Heart left ventricle (tissue), 16 donors: ENCODE measurements at regions of chr18 and their contacts with region 1.

Region 1: DNA sequence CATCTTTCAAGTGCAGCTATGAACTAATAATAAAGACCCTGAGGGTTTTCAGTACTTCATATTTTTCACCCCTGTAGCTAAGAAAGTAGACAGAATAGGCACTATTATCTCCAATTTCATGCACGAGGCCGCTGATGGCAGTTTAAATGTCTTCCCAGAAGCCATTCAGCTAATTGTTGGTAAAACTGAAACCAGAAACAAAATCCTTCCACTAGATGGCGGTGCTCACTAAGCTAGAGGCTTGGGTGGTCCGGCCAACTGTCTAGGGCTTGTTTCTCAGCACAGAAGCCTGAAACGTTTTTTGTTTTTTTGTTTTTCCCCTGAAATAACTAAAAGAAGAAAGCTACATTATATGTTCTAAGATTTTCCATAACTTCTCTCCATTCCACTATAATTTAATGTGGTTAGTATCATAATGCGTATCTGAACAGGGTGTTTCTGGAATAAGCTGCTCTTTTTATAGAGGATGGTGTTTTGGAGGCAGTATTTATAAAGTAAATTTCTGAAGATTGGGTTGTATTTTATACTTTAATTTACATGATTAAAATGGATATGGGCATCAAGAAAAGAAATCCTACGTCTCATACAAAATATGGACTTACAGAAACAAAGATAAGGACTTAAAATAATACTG is 159.4 kb downstream of the PIK3C3 start:
- DNase-seq: peak in 4 of 5 donors; percentile 31 to 60 (median 55)
- ATAC-seq: peak; percentile 69 to 88 (median 78)
- H3K4me3 ChIP-seq: no peak overlapping the region
- H3K27ac ChIP-seq: no peak overlapping the region
- H3K4me1 ChIP-seq: peaks cover 0 to 16% (median 2%) of the 10 kb centered on the region in 12 donors
- H3K27me3 ChIP-seq: no peaks in the 10 kb centered on the region
- CTCF ChIP-seq: peak; percentile 83 to 96 (median 89)
- POLR2A ChIP-seq: no peak

Region 2: DNA sequence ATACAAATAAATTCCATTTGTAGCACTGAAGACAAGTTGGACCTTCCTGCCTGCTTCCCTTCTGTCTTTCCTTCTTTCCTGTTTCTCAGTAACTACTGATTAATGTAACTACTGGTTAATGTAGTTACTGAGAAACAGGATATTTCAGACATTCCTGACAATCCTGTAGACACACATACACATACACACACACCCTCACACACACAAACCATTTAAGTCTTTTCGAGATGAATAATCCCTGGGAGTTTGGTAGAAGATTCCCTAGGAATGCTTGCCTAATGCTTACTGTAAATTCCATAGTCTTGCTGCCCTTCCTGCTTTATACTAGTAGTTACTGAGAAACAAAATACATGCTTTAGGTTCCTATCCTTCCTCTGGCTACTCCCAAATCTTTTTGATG is 75.5 kb before region 1 on chr18:
- intact Hi-C with region 1: no loop called
- DNase-seq: no peak
- ATAC-seq: no peak
- H3K4me3 ChIP-seq: no peak overlapping the region
- H3K27ac ChIP-seq: no peak overlapping the region
- H3K4me1 ChIP-seq: no peaks in the 10 kb centered on the region
- H3K27me3 ChIP-seq: no peaks in the 10 kb centered on the region
- CTCF ChIP-seq: no peak
- POLR2A ChIP-seq: no peak

Region 3: DNA sequence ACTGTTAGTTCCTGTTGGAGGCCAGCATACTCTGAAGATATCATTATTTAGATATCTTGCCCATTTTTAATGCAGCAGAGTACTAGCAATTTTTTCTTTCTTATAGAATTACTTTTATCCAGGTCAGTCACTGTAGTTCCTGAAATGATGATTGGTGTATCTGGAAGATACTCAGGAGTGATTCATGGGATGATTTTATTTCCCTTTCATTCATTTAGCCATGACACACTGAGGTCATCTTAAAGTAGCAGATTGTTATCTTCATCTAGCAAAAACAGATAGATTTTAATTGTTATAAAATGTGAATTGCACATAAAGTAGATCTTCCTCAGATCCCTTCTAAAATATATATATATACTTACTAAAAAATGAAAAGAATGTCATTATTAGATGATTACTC is 50.3 kb before region 1 on chr18:
- intact Hi-C with region 1: no loop called
- DNase-seq: no peak
- ATAC-seq: no peak
- H3K4me3 ChIP-seq: no peak overlapping the region
- H3K27ac ChIP-seq: no peak overlapping the region
- H3K4me1 ChIP-seq: no peaks in the 10 kb centered on the region
- H3K27me3 ChIP-seq: no peaks in the 10 kb centered on the region
- CTCF ChIP-seq: no peak
- POLR2A ChIP-seq: no peak

Region 4: GRCh38 chr18:42274488-42275137 is 160.2 kb after region 1 on chr18:
- intact Hi-C with region 1: loop called in 4 of 10 experiments (anchors 1 to 10 kb)
- DNase-seq: no peak
- ATAC-seq: no peak
- H3K4me3 ChIP-seq: no peak overlapping the region
- H3K27ac ChIP-seq: no peak overlapping the region
- H3K4me1 ChIP-seq: peaks cover 0 to 16% (median 8%) of the 10 kb centered on the region in 12 donors
- H3K27me3 ChIP-seq: no peaks in the 10 kb centered on the region
- CTCF ChIP-seq: peak in 2 of 12 donors; percentile 24 to 30
- POLR2A ChIP-seq: no peak

Region 5: DNA sequence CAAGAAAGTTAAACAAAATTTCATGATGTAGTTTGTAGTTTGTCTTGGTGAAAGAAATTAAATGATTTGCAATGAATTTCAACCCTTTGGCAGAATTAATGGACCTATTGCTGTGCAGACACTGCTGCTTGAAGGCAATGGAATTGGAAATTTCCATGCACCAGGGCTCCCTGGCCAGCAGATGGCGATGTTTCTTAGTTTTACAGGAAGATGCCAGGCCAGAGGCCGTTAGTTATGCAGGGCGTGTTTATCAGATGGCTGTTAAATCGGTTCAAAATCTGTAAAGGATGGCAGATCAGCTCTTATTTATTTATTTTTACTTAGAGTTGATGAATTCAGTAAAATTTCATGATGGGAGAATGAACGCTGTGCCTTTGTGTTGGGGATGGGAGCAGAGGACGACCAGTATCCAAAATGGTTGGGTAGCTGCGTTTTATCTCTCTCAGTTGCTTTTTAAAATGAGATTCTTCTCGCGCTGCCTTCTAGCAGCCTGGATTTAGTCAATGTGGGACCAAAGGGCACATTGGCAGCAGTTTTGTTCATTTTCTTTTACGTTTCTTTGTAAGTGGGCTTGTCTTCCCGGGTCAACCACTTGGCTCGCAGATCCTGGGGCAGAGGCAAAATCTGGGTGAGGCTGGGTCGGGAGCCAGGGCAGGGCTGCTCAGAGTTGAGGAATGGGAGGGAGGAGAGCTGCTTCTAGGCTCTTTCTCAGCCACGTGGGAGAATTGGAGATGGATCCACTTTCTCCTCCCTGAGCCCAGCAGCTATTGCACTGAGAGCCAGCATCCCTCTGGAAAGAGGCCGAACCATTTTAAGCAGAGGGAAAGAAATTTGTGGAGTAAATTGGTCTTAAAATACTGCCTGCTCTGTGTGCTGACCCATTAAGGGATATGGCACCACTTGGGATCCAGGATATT is 184.6 kb after region 1 on chr18:
- intact Hi-C with region 1: loop called in 5 of 10 experiments (anchors 5 to 10 kb)
- DNase-seq: peak in 4 of 5 donors; percentile 54 to 58 (median 57)
- ATAC-seq: peak; percentile 20 to 94 (median 82)
- H3K4me3 ChIP-seq: peak overlapping the region in 11 of 12 donors; percentile 1 to 43 (median 19)
- H3K27ac ChIP-seq: peak overlapping the region in 6 of 12 donors; percentile 9 to 40 (median 27)
- H3K4me1 ChIP-seq: peaks cover 0 to 3% (median 0%) of the 10 kb centered on the region in 12 donors
- H3K27me3 ChIP-seq: no peaks in the 10 kb centered on the region
- CTCF ChIP-seq: peak; percentile 83 to 96 (median 90)
- POLR2A ChIP-seq: no peak

Region 6: DNA sequence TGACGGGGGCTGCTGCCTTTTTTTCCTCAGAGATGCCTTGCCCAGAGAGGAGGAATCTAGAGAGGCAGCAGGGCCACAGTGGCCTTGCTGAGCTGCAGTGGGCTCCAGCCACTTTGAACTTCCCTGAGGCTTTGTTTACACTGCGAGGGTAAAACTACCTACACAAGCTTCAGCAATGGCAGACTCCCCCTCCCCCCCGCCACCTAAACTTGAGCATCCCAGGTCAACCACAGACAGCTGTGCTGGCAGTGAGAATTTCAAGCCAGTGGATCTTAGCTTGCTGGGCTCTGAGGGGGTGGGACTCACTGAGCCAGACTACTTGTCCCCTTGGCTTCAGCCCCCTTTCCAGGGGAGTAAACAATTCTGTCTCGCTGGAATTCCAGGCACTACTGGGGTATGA is 1151.0 kb after region 1 on chr18:
- intact Hi-C with region 1: loop called in 9 of 10 experiments (anchors 2 to 10 kb)
- DNase-seq: no peak
- ATAC-seq: no peak
- H3K4me3 ChIP-seq: no peak overlapping the region
- H3K27ac ChIP-seq: no peak overlapping the region
- H3K4me1 ChIP-seq: no peaks in the 10 kb centered on the region
- H3K27me3 ChIP-seq: no peaks in the 10 kb centered on the region
- CTCF ChIP-seq: no peak
- POLR2A ChIP-seq: no peak

Region 7: GRCh38 chr18:43396266-43396665 is 1281.8 kb after region 1 on chr18:
- intact Hi-C with region 1: loop called in 3 of 10 experiments (anchors 5 to 10 kb)
- DNase-seq: no peak
- ATAC-seq: no peak
- H3K4me3 ChIP-seq: no peak overlapping the region
- H3K27ac ChIP-seq: no peak overlapping the region
- H3K4me1 ChIP-seq: no peaks in the 10 kb centered on the region
- H3K27me3 ChIP-seq: peaks cover 0 to 3% (median 0%) of the 10 kb centered on the region in 9 donors
- CTCF ChIP-seq: peak in 8 of 12 donors; percentile 14 to 50 (median 44)
- POLR2A ChIP-seq: no peak

Region 8: GRCh38 chr18:43563780-43564179 is 1449.4 kb after region 1 on chr18:
- intact Hi-C with region 1: loop called in 3 of 10 experiments (anchors 10 kb)
- DNase-seq: no peak
- ATAC-seq: peak in 3 of 4 donors; percentile 61 to 66 (median 65)
- H3K4me3 ChIP-seq: no peak overlapping the region
- H3K27ac ChIP-seq: no peak overlapping the region
- H3K4me1 ChIP-seq: peaks cover 0 to 3% (median 0%) of the 10 kb centered on the region in 12 donors
- H3K27me3 ChIP-seq: no peaks in the 10 kb centered on the region
- CTCF ChIP-seq: peak; percentile 13 to 58 (median 45)
- POLR2A ChIP-seq: no peak

Region 9: GRCh38 chr18:43587538-43588153 is 1473.2 kb after region 1 on chr18:
- intact Hi-C with region 1: loop called in 1 of 10 experiments (anchors 5 kb)
- DNase-seq: no peak
- ATAC-seq: peak in 2 of 4 donors; percentile 38 to 65
- H3K4me3 ChIP-seq: no peak overlapping the region
- H3K27ac ChIP-seq: no peak overlapping the region
- H3K4me1 ChIP-seq: peaks cover 0 to 6% (median 0%) of the 10 kb centered on the region in 12 donors
- H3K27me3 ChIP-seq: no peaks in the 10 kb centered on the region
- CTCF ChIP-seq: peak; percentile 58 to 79 (median 68)
- POLR2A ChIP-seq: no peak